HAP-1 (cell line): ENCODE measurements at regions of chr18 and their contacts with region 1.

Region 1: GRCh38 chr18:52536039-52536438 is 196.0 kb downstream of the DCC start:
- DNase-seq: no peak
- H3K4me3 ChIP-seq: no peak overlapping the region
- H3K4me1 ChIP-seq: no peaks in the 10 kb centered on the region
- H3K27me3 ChIP-seq: no peaks in the 10 kb centered on the region

Region 2: DNA sequence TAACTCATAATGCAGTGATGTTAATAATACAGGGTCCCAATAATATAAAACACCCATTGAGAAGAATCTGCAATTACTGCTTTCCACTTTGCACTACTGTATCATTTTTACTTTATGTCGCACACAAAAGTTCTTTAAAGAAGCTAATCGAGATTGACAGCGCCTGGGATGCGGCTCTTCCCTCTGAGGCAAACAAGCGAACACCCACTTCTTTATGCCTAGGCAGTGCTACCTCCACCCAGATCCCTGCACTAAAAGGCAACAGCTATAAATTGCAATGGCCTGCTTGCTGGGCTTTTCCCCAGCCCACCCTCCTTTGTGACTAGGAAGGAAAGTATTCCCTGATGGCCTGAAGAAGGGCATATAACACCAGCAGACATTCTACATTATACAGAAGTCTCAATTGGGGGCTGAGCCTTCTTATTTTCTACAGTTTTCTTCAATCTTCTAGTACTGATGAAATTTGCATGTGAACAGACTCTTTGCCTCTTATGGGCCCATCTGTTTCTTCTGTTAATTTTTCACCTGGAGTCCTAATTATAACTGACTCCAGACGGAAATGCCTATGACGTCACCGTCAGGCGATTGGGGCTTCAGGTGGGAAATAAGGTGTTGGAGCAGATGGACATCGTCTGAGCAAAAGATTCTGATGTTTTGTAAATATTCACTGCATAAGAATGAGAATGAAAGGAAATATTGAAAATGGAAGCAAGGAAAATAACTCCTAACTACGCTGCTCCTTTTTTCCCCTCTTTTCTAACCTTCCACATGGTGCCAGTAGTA is 335.0 kb before region 1 on chr18:
- in situ Hi-C with region 1: no loop called
- DNase-seq: no peak
- H3K4me3 ChIP-seq: no peak overlapping the region
- H3K4me1 ChIP-seq: no peaks in the 10 kb centered on the region
- H3K27me3 ChIP-seq: no peaks in the 10 kb centered on the region

Region 3: DNA sequence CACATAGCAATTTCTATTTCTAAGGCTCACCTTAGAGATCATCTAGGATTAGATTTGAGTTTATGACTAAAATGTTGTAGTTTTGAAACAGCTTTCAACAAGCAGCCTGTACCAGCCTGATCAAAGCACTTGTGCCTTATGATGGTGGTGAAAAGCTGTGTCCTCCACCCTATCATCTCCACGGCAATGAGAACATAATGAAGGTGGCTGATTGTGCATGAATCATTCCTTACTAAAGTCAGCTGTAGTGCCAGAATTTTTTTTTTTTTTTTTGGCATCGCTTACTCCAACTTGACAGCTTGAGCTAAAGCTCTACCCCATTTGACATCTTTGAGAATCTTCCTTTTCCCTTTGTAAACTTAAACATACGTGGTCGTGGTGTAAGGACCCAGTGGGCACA is 110.0 kb before region 1 on chr18:
- in situ Hi-C with region 1: loop called (anchors 25 kb)
- DNase-seq: no peak
- H3K4me3 ChIP-seq: no peak overlapping the region
- H3K4me1 ChIP-seq: no peaks in the 10 kb centered on the region
- H3K27me3 ChIP-seq: no peaks in the 10 kb centered on the region

Region 4: GRCh38 chr18:52598921-52599320 is 62.9 kb after region 1 on chr18:
- in situ Hi-C with region 1: no loop called
- DNase-seq: no peak
- H3K4me3 ChIP-seq: no peak overlapping the region
- H3K4me1 ChIP-seq: no peaks in the 10 kb centered on the region
- H3K27me3 ChIP-seq: no peaks in the 10 kb centered on the region

Region 5: GRCh38 chr18:52869963-52870907 is 334.2 kb after region 1 on chr18:
- in situ Hi-C with region 1: no loop called
- DNase-seq: no peak
- H3K4me3 ChIP-seq: no peak overlapping the region
- H3K4me1 ChIP-seq: no peaks in the 10 kb centered on the region
- H3K27me3 ChIP-seq: no peaks in the 10 kb centered on the region